WTC11 (cell line): ENCODE measurements at regions of chr2 and their contacts with region 1.

Region 1: DNA sequence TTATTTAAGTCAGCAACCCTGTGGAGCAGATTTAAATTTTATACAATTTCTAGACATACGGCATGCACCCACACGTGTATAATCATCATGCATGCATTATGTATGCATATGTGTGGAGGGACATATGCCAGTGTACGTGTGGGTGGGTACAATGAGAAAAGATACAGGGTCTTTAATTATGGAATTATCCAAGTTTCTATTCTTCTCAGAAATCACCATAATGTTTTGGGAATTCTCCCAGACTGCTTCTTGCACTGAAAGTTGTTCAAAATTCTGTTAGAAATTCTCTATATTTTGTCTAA is 63.9 kb upstream of the TMEM18 start:
- DNase-seq: no peak
- ATAC-seq: no peak
- H3K4me3 Mint-ChIP-seq: peak overlapping the region; percentile 80
- H3K27ac Mint-ChIP-seq: peak overlapping the region; percentile 94
- H3K4me1 Mint-ChIP-seq: peaks cover 35% of the 10 kb centered on the region
- H3K27me3 Mint-ChIP-seq: no peaks in the 10 kb centered on the region; the same call in 1 of the 2 replicates
- CTCF ChIP-seq: no peak

Region 2: DNA sequence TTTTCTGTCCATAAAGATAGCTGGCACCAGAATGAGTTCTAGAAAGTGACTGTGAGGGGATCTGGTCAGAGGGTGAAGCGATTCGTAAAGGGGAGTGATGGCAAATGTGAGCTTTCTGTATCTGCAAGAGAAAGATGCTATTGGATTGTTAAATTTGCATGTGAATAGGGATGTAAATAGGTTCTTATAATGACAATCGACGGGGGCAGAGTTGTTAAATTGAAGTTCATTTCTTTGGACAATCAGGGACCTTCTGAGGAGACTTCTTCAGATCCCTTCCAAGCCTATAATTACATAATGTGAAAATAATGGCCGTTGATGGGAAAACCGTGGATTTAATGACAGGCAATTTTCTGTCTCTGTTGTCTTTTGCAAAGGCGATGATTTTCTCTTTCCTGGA is 11.8 kb before region 1 on chr2:
- CTCF ChIA-PET with region 1: interaction called, 10 read pairs
- POLR2A ChIA-PET with region 1: interaction called, 7 read pairs
- DNase-seq: no peak
- ATAC-seq: peak; percentile 86
- H3K4me3 Mint-ChIP-seq: peak overlapping the region; percentile 38
- H3K27ac Mint-ChIP-seq: peak overlapping the region; percentile 99
- H3K4me1 Mint-ChIP-seq: peaks cover 68% of the 10 kb centered on the region
- H3K27me3 Mint-ChIP-seq: peaks cover 3% of the 10 kb centered on the region
- CTCF ChIP-seq: no peak

Region 3: DNA sequence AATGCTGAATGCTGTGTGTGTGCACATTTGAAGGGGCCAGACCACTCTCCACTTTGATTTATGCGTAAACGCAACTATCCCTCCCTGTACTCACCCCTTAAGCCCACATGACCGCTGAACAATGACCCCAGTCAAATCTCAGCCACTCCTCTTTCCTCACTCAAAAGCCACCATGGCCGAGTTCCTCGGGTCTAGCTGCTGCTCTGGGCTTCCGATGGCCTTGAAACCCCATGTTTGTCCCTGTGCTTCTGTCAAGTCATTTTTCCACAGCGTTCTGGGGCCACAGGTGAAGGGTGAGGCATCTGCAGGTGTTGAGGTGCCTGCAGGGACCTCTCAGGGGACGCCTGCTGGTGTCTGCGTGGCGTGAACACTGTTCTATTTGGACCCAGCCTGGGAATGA is 10.3 kb after region 1 on chr2:
- CTCF ChIA-PET with region 1: no interaction called
- POLR2A ChIA-PET with region 1: no interaction called
- DNase-seq: no peak
- ATAC-seq: no peak
- H3K4me3 Mint-ChIP-seq: no peak overlapping the region
- H3K27ac Mint-ChIP-seq: no peak overlapping the region
- H3K4me1 Mint-ChIP-seq: no peaks in the 10 kb centered on the region
- H3K27me3 Mint-ChIP-seq: no peaks in the 10 kb centered on the region
- CTCF ChIP-seq: no peak